ENCODE measurements at regions of chr11 and their contacts with region 1.

Region 1: GRCh38 chr11:101456812-101457211 is 127.0 kb downstream of the TRPC6 start:
- DNase-seq: peak; percentile 62
- H3K4me3 ChIP-seq: no peak overlapping the region
- H3K27ac ChIP-seq: no peak overlapping the region
- H3K4me1 ChIP-seq: no peaks in the 10 kb centered on the region
- CTCF ChIP-seq: peak; percentile 89

Region 2: DNA sequence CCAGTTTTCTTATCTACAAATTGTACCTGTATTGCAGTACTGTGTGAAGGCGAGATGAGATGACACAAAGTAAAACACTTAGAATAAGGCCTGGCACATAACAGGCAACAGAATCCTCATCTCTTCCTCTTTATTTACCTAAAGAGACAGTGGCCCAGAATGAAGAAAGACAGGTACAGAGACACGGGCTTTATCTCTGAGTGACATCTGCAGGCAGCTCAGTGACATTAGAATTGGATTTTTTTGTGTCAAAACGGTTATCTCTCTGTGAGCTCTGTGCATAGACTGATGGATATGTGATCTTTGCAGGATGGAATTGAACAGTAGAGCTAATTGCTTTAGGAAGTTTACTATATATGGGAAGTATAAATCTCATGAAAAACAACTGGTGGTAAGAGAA is 163.2 kb after region 1 on chr11:
- CTCF ChIA-PET with region 1: interaction called, 5 read pairs
- POLR2A ChIA-PET with region 1: interaction called, 7 read pairs
- intact Hi-C with region 1: loop called (anchors 2 kb)
- DNase-seq: peak; percentile 60
- H3K4me3 ChIP-seq: no peak overlapping the region
- H3K27ac ChIP-seq: no peak overlapping the region
- H3K4me1 ChIP-seq: no peaks in the 10 kb centered on the region
- CTCF ChIP-seq: peak; percentile 81

Region 3: GRCh38 chr11:101848262-101848661 is 391.4 kb after region 1 on chr11:
- CTCF ChIA-PET with region 1: interaction called, 3 read pairs
- POLR2A ChIA-PET with region 1: interaction called, 3 read pairs
- intact Hi-C with region 1: loop called (anchors 1 kb)
- DNase-seq: peak; percentile 47
- H3K4me3 ChIP-seq: no peak overlapping the region
- H3K27ac ChIP-seq: no peak overlapping the region
- H3K4me1 ChIP-seq: no peaks in the 10 kb centered on the region
- CTCF ChIP-seq: peak; percentile 85

Measured in OCI-LY7 (cell line).